Transverse colon (tissue), 4 donors: ENCODE measurements at regions of chr4 and their contacts with region 1.

Region 1: GRCh38 chr4:114976901-114977300 is 136.5 kb downstream of the NDST4 start:
- DNase-seq: no peak
- H3K4me3 ChIP-seq: no peak overlapping the region
- H3K27ac ChIP-seq: no peak overlapping the region
- H3K4me1 ChIP-seq: no peaks in the 10 kb centered on the region
- H3K27me3 ChIP-seq: no peaks in the 10 kb centered on the region
- CTCF ChIP-seq: no peak
- EP300 ChIP-seq: no peak
- POLR2A ChIP-seq: no peak

Region 2: GRCh38 chr4:114941503-114941902 is 35.4 kb before region 1 on chr4:
- in situ Hi-C with region 1: no loop called
- intact Hi-C with region 1: loop called (anchors 2 kb)
- DNase-seq: no peak
- H3K4me3 ChIP-seq: no peak overlapping the region
- H3K27ac ChIP-seq: no peak overlapping the region
- H3K4me1 ChIP-seq: no peaks in the 10 kb centered on the region
- H3K27me3 ChIP-seq: no peaks in the 10 kb centered on the region
- CTCF ChIP-seq: no peak
- EP300 ChIP-seq: no peak
- POLR2A ChIP-seq: no peak